H1 (cell line): ENCODE measurements at regions of chr6 and their contacts with region 1.

Region 1: DNA sequence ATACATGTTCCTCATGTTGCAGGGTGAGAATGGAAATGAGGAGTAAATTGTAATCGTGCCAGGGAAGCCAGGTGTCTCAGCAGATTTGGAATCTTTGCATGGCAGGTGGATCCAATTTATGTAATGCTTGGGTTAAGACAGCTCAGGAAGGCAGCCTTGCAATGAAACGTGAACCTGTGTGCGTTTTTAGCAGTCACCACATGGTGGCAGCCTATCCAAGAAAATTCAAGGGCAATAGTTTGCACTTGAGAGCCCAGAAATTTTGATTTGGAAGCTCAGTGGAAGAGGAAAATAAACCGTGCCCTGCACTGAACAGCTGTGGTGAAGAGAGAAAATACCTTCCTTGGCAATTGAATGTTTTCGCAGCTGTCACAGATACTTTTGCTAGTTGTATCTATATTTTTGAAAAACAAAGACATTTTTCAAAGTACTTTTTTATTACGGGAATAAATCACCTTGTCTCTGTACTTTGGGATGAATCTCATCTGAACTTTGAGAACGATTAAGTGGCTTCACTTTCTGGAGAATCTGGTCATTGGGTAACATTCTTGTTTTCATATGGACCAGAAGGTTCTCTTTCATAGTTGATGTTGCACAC is 26.5 kb downstream of the MTHFD1L start:
- DNase-seq: peak; percentile 50 to 83
- H3K4me3 ChIP-seq: no peak overlapping the region
- H3K27ac ChIP-seq: no peak overlapping the region
- H3K4me1 ChIP-seq: peaks cover 0 to 3% (median 0%) of the 10 kb centered on the region in 4 experiments; a peak in 1 of 7 replicates
- H3K27me3 ChIP-seq: no peaks in the 10 kb centered on the region
- CTCF ChIP-seq: peak; percentile 51 to 90 (median 73)
- EP300 ChIP-seq: no peak
- POLR2A ChIP-seq: no peak
- RAD21 ChIP-seq: peak; percentile 81

Region 2: DNA sequence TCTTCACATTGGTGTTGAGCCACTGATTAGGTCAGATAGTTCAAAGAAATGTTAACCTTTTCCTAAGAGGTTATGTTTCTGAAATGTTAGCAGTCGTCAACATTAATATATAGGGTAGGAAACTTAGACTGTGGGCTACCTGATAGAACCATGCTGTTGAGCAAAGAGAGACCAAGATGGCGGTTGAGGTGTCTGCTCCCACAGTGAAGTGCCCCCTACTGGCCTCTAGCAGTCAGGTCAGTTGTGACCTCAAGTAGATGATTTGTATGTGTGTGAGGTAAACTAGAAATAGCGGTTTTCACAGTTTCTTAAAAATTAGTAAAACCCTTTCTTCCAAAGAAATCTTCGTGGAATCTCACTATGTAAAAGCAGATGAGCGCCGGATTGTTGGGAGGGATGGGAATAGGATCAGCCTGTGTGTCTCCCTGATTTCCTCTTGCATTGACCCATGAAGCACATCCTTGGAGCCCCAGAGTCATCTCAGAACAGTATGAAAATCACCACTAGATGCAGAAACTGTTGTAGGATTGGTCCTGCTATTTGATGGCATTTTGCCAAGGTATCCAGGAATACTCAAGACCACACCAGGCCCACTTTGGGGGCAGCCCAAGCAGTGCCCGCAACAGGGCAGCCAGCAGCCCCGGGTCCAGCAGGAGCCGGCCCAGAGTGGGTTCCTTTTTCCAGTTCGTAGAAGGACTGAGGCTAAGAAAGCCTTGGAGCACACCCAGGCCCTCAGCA is 14.0 kb after region 1 on chr6:
- CTCF ChIA-PET with region 1: interaction called, 100 read pairs
- POLR2A ChIA-PET with region 1: interaction called, 5 read pairs
- DNase-seq: no peak
- H3K4me3 ChIP-seq: no peak overlapping the region
- H3K27ac ChIP-seq: no peak overlapping the region
- H3K4me1 ChIP-seq: no peaks in the 10 kb centered on the region
- H3K27me3 ChIP-seq: no peaks in the 10 kb centered on the region
- CTCF ChIP-seq: peak; percentile 57 to 72 (median 66)
- EP300 ChIP-seq: no peak
- POLR2A ChIP-seq: no peak
- RAD21 ChIP-seq: peak; percentile 22 to 36; a peak in 3 of 4 replicates

Region 3: GRCh38 chr6:150922137-150922536 is 30.1 kb after region 1 on chr6:
- CTCF ChIA-PET with region 1: interaction called, 12 read pairs
- POLR2A ChIA-PET with region 1: no interaction called
- DNase-seq: no peak
- H3K4me3 ChIP-seq: no peak overlapping the region
- H3K27ac ChIP-seq: no peak overlapping the region
- H3K4me1 ChIP-seq: no peaks in the 10 kb centered on the region
- H3K27me3 ChIP-seq: no peaks in the 10 kb centered on the region
- CTCF ChIP-seq: no peak
- EP300 ChIP-seq: no peak
- POLR2A ChIP-seq: no peak
- RAD21 ChIP-seq: no peak

Region 4: GRCh38 chr6:151052021-151052646 is 160.1 kb after region 1 on chr6:
- CTCF ChIA-PET with region 1: no interaction called
- POLR2A ChIA-PET with region 1: no interaction called
- DNase-seq: no peak
- H3K4me3 ChIP-seq: no peak overlapping the region
- H3K27ac ChIP-seq: no peak overlapping the region
- H3K4me1 ChIP-seq: no peaks in the 10 kb centered on the region
- H3K27me3 ChIP-seq: no peaks in the 10 kb centered on the region
- CTCF ChIP-seq: no peak
- EP300 ChIP-seq: no peak
- POLR2A ChIP-seq: no peak
- RAD21 ChIP-seq: no peak

Region 5: DNA sequence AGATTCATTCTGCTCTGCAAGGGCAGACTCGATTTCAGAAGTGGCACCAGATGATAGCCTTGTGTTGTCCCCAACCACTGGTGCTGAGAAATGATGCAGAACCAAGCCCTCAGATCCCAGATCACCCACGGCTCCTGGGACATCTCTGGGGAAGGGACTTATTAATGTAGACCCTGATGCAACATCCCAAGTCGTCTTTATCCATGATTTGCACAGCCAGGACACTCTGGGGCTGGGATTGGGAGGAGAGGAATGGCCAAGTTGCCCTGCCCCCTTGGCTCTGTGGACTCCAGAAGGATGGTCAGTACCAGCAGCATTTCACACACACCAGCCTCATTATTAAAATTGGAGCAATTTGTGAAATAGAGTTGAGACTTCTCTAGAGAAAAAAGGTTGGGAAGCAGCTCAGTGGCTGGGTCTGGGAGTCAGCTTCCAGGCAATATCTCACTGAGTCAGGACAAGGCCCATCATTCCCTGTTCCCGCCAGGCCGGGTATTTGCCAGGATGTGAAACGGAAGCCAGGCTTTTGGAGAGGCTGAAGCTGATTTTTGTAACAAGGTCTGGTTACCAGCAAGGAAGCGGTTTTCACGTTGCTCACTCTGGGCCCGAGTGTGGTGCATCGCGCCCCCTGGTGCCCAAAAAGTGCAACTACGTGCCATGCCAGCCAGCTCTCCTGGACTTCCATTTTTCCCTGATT is 432.0 kb after region 1 on chr6:
- CTCF ChIA-PET with region 1: interaction called, 34 read pairs
- POLR2A ChIA-PET with region 1: no interaction called
- DNase-seq: peak; percentile 63 to 97
- H3K4me3 ChIP-seq: no peak overlapping the region
- H3K27ac ChIP-seq: no peak overlapping the region
- H3K4me1 ChIP-seq: peaks cover 0 to 3% (median 0%) of the 10 kb centered on the region in 4 experiments; a peak in 3 of 7 replicates
- H3K27me3 ChIP-seq: peaks cover 0 to 6% (median 1%) of the 10 kb centered on the region in 4 experiments; a peak in 2 of 7 replicates
- CTCF ChIP-seq: peak; percentile 91 to 99 (median 98)
- EP300 ChIP-seq: no peak
- POLR2A ChIP-seq: no peak
- RAD21 ChIP-seq: peak; percentile 95 to 99